Prostate gland (tissue), 2 donors: ENCODE measurements at regions of chr1 and their contacts with region 1.

Region 1: DNA sequence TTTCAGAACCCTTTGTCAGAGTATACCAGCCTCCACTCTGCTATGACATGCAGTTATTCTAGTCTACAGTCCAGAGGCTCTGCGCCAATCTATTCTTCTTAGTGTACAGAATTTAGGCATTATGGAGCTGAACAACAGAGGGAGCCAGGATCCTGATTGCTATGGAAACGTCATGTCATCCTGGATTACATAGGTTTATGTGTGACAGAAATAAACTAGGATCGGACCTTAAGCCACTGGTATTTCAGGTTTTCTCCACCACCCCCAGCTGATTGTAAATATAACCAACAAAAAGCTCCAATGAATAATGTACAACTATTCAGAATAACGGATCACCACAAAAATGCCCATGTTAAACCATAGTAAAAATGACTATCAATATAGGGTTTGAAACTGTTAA is 48.1 kb upstream of the EEIG2 start:
- DNase-seq: no peak
- H3K4me3 ChIP-seq: no peak overlapping the region
- H3K27ac ChIP-seq: no peak overlapping the region
- H3K4me1 ChIP-seq: no peaks in the 10 kb centered on the region
- H3K27me3 ChIP-seq: no peaks in the 10 kb centered on the region
- CTCF ChIP-seq: no peak
- POLR2A ChIP-seq: no peak

Region 2: DNA sequence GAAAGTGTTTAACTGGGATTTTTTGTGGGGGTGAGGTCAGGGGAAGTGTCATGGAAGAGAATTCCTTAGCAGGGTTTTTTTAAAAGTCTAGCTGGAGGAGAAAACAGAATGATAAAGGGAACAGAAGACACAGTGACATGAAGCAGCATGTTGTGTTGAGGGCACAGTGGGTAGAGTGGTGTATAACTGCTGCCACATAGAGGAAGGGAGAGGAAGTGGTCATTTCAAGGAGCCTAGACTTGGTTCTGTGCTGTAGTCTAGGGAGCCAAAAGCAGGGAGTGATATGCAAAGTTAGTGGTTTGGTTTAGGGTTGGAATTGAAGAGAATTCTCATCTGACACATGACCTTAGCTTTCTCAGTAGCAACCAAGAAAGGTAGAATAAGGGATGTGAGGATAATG is 58.3 kb after region 1 on chr1:
- intact Hi-C with region 1: no loop called
- DNase-seq: no peak
- H3K4me3 ChIP-seq: no peak overlapping the region
- H3K27ac ChIP-seq: no peak overlapping the region
- H3K4me1 ChIP-seq: no peaks in the 10 kb centered on the region
- H3K27me3 ChIP-seq: no peaks in the 10 kb centered on the region
- CTCF ChIP-seq: peak in 1 of 4 experiments; percentile 35
- POLR2A ChIP-seq: no peak

Region 3: DNA sequence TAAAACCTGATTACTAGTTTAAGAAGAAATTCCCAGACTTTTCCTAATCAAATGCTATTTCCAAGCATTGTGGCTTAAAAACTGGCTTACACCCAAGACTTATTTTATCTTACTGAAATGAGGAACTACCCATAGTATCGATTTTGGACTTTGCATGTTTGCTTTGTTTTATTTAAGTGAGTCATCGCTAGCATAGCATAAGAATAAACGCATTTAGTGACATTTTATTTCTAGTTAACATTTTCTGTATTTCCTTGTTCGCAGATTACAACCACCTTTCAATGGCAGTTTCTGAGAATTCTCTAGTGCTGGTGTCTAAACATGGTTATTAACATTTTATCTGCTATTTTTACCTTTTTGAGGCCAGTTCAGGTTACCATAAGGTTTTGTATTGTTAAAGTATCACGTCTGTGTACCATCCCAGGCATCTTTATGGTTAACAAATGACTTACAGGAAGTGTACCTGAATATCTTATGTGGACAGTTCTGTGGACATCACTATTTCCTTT is 72.6 kb after region 1 on chr1:
- intact Hi-C with region 1: no loop called
- DNase-seq: no peak
- H3K4me3 ChIP-seq: no peak overlapping the region
- H3K27ac ChIP-seq: no peak overlapping the region
- H3K4me1 ChIP-seq: no peaks in the 10 kb centered on the region
- H3K27me3 ChIP-seq: no peaks in the 10 kb centered on the region
- CTCF ChIP-seq: no peak
- POLR2A ChIP-seq: no peak

Region 4: DNA sequence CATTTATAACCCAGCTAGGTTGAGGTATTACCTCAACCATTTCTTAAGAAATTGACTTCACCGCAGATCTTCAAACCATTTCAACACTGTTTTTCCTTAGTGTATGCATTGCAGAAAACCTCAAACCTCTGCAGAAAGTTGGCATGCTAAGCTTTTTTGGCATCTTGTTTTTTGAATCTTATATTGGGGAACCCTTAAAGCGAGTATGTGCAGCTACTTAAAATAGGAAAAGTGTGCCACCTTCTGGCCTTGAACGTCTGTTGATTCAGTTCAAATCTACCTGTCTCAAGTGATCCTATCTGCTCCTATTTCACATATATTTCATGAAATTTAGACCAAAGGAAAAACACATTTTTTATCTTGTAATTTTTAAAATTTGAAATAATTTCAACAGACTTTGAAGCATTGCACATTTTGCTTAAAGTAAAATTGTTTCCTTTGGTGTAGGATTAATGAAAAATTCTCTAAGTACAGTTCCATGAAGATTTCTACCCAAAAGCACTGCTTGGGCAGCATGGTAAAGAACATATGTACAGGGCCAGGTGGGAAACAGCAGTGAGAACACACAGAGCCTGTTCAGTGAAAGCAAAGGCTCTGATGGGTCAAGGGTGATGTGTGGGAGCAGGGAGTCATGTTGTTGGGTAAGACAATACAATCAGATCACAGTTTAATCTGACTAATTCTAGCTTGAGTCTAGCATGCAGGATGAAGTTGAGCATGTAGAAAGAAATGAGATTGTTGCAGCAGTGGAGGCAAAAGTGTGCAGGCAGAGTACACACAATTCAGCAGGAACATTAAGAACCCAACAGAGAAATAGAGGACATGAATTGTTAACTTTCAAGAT is 131.9 kb after region 1 on chr1:
- intact Hi-C with region 1: loop called (anchors 2 kb)
- DNase-seq: peak; percentile 57
- H3K4me3 ChIP-seq: no peak overlapping the region
- H3K27ac ChIP-seq: no peak overlapping the region
- H3K4me1 ChIP-seq: no peaks in the 10 kb centered on the region
- H3K27me3 ChIP-seq: no peaks in the 10 kb centered on the region
- CTCF ChIP-seq: peak; percentile 32 to 79 (median 54)
- POLR2A ChIP-seq: no peak